GM12878 (cell line): ENCODE measurements at regions of chr6 and their contacts with region 1.

Region 1: DNA sequence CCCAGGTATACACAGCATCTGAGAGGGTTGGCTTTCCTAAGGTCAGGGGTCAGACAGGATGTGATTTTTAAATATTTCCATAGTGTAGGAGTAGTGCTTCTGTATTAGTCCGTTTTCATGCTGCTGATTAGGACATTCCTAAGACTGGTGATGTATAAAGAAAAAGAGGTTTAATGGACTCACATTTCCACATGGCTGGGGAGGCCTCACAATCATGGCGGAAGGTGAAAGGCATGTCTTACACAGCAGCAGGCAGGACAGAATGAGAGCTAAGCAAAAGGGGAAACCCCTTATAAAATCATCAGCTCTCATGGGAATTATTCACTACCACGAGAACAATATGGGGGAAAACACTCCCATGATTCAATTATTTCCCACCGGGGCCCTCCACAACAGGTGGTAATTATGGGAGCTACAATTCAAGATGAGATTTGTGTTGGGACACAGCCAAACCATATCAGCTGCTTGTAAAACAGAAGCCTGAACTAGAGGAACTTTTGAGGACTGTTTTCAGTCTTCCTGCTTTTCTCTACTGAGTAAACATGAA is 91.0 kb upstream of the MEI4 start:
- DNase-seq: no peak
- ATAC-seq: peak; percentile 50
- H3K4me3 ChIP-seq: no peak overlapping the region
- H3K27ac ChIP-seq: no peak overlapping the region
- H3K4me1 ChIP-seq: no peaks in the 10 kb centered on the region
- H3K27me3 ChIP-seq: no peaks in the 10 kb centered on the region
- CTCF ChIP-seq: no peak
- EP300 ChIP-seq: no peak
- POLR2A ChIP-seq: no peak
- RAD21 ChIP-seq: no peak

Region 2: DNA sequence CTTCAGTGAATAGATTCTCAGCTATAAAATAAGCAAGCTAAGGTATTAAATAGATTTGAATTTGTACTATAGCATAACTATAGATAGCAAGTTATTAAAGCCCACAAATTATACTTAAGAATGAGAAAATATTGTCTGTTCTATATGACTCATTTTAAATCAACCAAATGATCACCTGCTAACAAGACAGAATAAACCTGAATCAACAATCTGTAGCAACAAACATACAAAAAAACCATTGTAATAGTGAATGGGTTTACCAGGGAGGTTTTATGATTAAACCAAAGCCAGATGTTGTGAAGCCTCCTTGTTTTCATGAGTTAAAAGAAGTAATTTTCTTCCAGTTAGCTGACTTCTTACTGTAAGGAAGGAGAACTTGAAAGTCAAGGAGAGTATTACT is 26.7 kb before region 1 on chr6:
- CTCF ChIA-PET with region 1: interaction called, 6 read pairs
- POLR2A ChIA-PET with region 1: interaction called, 4 read pairs
- RAD21 ChIA-PET with region 1: interaction called, 50 read pairs
- SMC1A ChIA-PET with region 1: interaction called, 524 read pairs
- in situ Hi-C with region 1: no loop called
- intact Hi-C with region 1: no loop called
- DNase-seq: no peak
- ATAC-seq: peak; percentile 15; the same call in 2 of the 3 replicates
- H3K4me3 ChIP-seq: no peak overlapping the region
- H3K27ac ChIP-seq: no peak overlapping the region
- H3K4me1 ChIP-seq: no peaks in the 10 kb centered on the region
- H3K27me3 ChIP-seq: no peaks in the 10 kb centered on the region
- CTCF ChIP-seq: no peak
- EP300 ChIP-seq: no peak
- POLR2A ChIP-seq: no peak
- RAD21 ChIP-seq: no peak

Region 3: DNA sequence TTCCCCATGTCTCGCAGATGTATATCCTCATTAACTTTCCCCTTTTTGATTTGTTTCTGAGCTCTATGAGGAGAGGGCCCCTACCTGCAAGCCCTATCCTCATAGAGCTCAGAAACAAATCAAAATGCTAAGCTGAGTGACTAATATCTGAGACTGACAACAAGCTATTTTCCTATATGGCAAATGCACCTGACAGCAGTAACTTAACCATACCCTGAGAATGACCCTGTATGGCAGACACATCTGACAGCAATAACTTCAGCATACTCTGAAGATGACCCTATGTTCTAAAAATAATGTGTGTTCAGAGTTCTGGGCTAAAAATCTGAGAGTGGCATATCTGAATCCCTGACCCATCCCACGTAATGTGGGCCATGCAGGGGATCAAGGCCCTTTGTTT is 12.0 kb after region 1 on chr6:
- CTCF ChIA-PET with region 1: interaction called, 5 read pairs
- POLR2A ChIA-PET with region 1: interaction called, 3 read pairs
- RAD21 ChIA-PET with region 1: interaction called, 16 read pairs
- SMC1A ChIA-PET with region 1: interaction called, 6 read pairs
- in situ Hi-C with region 1: no loop called
- intact Hi-C with region 1: no loop called
- DNase-seq: no peak
- ATAC-seq: peak; percentile 55
- H3K4me3 ChIP-seq: no peak overlapping the region
- H3K27ac ChIP-seq: no peak overlapping the region
- H3K4me1 ChIP-seq: no peaks in the 10 kb centered on the region
- H3K27me3 ChIP-seq: no peaks in the 10 kb centered on the region
- CTCF ChIP-seq: no peak
- EP300 ChIP-seq: no peak
- POLR2A ChIP-seq: no peak
- RAD21 ChIP-seq: no peak